ENCODE measurements at regions of chr1 and their contacts with region 1.

Region 1: DNA sequence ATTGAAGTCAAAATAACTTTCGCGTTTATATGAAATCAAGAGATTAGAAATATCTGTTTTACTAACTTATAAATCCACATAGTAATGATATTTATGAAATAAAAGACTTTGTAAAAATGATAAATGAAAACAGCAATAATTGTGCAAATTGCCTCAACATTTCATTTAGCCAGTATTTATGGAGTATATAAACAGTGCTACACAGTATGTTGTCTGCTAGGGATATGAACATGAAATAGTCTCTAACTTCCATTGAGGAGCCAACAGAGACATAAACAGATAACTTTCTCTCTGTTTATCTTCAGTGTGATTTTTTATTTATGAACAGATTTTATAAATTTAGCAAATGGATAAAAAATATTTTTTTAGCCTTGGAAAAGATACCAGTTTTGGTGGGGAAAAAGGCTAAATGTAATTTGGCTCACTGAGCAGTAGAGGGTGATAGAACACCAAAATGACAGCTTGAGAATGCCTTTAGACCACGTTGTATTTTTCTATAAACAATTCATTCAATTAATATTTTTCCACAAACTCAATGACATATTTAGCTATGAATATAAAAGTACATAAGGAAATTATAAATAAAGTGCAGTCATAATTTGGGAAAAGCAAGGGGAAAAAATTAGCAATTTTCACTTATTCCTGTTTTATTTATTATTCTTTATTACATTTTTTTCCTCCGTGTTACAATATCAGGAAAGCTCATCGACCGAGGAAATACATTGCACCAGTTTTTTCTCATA is 47.5 kb upstream of the EEIG2 start:
- DNase-seq: no peak

Region 2: GRCh38 chr1:108559215-108560186 is 47.1 kb after region 1 on chr1 and contains the start of gene EEIG2:
- intact Hi-C with region 1: loop called in 1 of 2 experiments (anchors 5 kb)
- DNase-seq: peak; percentile 96
- total RNA-seq, gene EEIG2: 26.8 to 29.1 TPM

Region 3: GRCh38 chr1:108584348-108584856 is 72.0 kb after region 1 on chr1:
- intact Hi-C with region 1: no loop called
- DNase-seq: no peak

Region 4: DNA sequence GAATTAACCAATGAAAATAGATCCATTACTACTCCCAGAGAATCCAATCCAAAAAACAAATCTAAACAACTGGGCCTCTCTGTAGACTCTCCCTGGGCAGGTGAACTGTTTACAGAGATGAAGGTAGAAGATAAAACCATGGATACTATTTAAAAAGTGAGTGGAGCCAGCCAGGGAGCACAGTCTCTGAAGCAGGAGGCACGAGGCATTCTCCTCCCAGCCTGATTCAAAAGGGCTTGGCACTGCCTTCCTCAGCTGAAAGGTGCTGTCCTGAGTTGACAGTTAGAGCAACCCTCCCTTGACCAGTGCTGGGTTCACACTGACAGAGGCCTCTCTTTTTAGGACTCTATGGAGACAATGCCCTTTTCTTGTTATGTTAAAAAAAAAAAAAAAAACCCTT is 111.6 kb after region 1 on chr1:
- intact Hi-C with region 1: no loop called
- DNase-seq: no peak

Region 5: DNA sequence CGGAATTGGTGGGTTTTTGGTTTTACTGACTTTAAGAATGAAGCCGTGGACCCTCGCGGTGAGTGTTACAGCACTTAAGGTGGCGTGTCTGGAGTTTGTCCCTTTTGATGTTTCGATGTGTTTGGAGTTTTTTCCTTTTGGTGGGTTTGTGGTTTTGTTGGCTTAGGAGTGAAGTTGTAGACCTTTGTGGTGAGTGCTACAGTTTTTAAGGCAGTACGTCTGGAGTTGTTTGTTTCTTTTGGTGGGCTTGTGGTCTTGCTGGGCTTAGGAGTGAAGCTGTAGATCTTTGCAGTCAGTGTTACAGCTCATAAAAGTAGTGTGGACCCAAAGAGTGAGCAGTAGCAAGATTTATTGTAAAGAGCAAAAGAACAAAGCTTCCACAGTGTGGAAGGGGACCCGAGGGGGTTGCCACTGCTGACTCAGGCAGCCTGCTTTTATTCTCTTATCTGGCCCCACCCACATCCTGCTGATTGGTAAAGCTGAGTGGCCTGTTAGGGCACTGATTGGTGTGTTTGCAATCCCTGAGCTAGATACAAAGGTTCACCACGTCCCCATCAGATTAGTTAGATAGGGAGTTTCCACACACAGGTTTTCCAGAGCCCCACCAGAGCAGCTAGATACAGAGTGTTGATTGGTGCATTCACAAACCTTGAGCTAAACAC is 127.6 kb after region 1 on chr1:
- intact Hi-C with region 1: loop called (anchors 2 to 5 kb)
- DNase-seq: no peak

Region 6: GRCh38 chr1:108646648-108647269 is 134.3 kb after region 1 on chr1:
- intact Hi-C with region 1: loop called (anchors 2 to 5 kb)
- DNase-seq: peak; percentile 96

Region 7: GRCh38 chr1:109027841-109028240 is 515.4 kb after region 1 on chr1:
- intact Hi-C with region 1: no loop called
- DNase-seq: no peak